Panc1 (cell line): ENCODE measurements at regions of chr2 and their contacts with region 1.

Region 1: GRCh38 chr2:129437364-129437763 is 542.1 kb upstream of the RAB6C start:
- DNase-seq: no peak
- ATAC-seq: no peak
- H3K4me3 ChIP-seq: no peak overlapping the region
- H3K27ac ChIP-seq: no peak overlapping the region
- H3K4me1 ChIP-seq: no peaks in the 10 kb centered on the region
- H3K27me3 ChIP-seq: peaks cover 4% of the 10 kb centered on the region; the same call in 1 of the 2 replicates
- CTCF ChIP-seq: no peak

Region 2: GRCh38 chr2:128770143-128771085 is 667.0 kb before region 1 on chr2:
- CTCF ChIA-PET with region 1: no interaction called
- POLR2A ChIA-PET with region 1: interaction called, 11 read pairs
- in situ Hi-C with region 1: no loop called
- intact Hi-C with region 1: no loop called
- DNase-seq: no peak
- ATAC-seq: no peak
- H3K4me3 ChIP-seq: no peak overlapping the region
- H3K27ac ChIP-seq: no peak overlapping the region
- H3K4me1 ChIP-seq: no peaks in the 10 kb centered on the region
- H3K27me3 ChIP-seq: no peaks in the 10 kb centered on the region
- CTCF ChIP-seq: no peak

Region 3: GRCh38 chr2:129849559-129850160 is 412.3 kb after region 1 on chr2:
- CTCF ChIA-PET with region 1: no interaction called
- POLR2A ChIA-PET with region 1: no interaction called
- in situ Hi-C with region 1: no loop called
- intact Hi-C with region 1: no loop called
- DNase-seq: peak; percentile 53
- ATAC-seq: peak; percentile 85
- H3K4me3 ChIP-seq: no peak overlapping the region
- H3K27ac ChIP-seq: no peak overlapping the region
- H3K4me1 ChIP-seq: no peaks in the 10 kb centered on the region; the same call in 1 of the 2 replicates
- H3K27me3 ChIP-seq: peaks cover 3% of the 10 kb centered on the region; the same call in 1 of the 2 replicates
- CTCF ChIP-seq: peak; percentile 71